ENCODE measurements at regions of chr9 and their contacts with region 1.

Region 1: GRCh38 chr9:133149126-133150107 is 14.3 kb downstream of the GBGT1 start:
- DNase-seq: peak; percentile 88 to 92 (median 90)
- ATAC-seq: peak; percentile 73 to 87 (median 82)
- H3K4me3 ChIP-seq: peak overlapping the region; percentile 29 to 62 (median 41)
- H3K27ac ChIP-seq: peak overlapping the region; percentile 55 to 61 (median 60)
- H3K4me1 ChIP-seq: peaks cover 0 to 15% (median 5%) of the 10 kb centered on the region in 4 donors
- H3K27me3 ChIP-seq: no peaks in the 10 kb centered on the region
- CTCF ChIP-seq: peak; percentile 15 to 24 (median 18)
- POLR2A ChIP-seq: peak; percentile 31

Region 2: DNA sequence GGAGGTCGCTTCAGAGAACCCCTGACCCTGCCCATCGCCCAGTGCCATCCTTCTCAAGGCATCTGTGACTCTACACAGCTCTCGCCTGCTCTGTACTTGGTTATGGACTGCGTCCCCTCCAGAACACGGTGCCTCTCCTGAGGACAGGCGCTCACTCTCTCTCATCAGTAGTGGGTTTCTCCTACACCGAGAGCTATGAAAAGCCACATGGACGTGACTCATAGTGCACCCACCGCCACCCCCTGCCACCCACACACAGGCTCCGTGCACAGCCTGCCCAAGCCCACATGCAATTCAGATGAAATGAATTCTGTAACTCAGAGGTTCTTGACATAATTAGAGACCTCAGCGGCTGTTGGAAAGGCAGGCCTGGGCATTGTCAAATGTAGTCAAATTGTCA is 104.8 kb before region 1 on chr9:
- intact Hi-C with region 1: loop called in 1 of 2 experiments (anchors 5 kb)
- DNase-seq: no peak
- ATAC-seq: no peak
- H3K4me3 ChIP-seq: no peak overlapping the region
- H3K27ac ChIP-seq: no peak overlapping the region
- H3K4me1 ChIP-seq: no peaks in the 10 kb centered on the region
- H3K27me3 ChIP-seq: no peaks in the 10 kb centered on the region
- CTCF ChIP-seq: no peak
- POLR2A ChIP-seq: no peak

Region 3: DNA sequence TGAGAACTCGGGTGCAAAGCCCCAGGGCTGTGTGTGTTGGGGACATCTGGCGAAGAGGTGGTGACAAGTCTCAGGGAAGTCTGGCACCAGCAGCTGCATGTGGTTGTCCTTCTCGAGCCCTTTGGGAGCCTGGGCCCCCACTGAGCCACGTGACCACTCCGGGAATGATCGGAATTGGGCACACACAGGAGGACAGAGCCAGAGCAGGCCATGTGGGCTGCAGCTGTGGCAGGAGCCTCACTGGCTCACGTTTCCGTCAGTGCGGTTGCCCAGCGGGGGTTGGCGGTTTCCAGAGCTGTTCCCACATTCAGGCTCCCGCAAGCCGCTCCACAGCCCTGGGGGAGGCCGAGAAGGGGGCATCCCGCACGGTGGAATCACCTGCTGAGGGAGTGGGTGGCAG is 94.5 kb before region 1 on chr9:
- intact Hi-C with region 1: no loop called
- DNase-seq: peak in 1 of 3 donors; percentile 35
- ATAC-seq: no peak
- H3K4me3 ChIP-seq: no peak overlapping the region
- H3K27ac ChIP-seq: no peak overlapping the region
- H3K4me1 ChIP-seq: no peaks in the 10 kb centered on the region
- H3K27me3 ChIP-seq: no peaks in the 10 kb centered on the region
- CTCF ChIP-seq: no peak
- POLR2A ChIP-seq: no peak

Measured in right lobe of liver (tissue), 6 donors.